ENCODE measurements at regions of chr10 and their contacts with region 1.

Region 1: DNA sequence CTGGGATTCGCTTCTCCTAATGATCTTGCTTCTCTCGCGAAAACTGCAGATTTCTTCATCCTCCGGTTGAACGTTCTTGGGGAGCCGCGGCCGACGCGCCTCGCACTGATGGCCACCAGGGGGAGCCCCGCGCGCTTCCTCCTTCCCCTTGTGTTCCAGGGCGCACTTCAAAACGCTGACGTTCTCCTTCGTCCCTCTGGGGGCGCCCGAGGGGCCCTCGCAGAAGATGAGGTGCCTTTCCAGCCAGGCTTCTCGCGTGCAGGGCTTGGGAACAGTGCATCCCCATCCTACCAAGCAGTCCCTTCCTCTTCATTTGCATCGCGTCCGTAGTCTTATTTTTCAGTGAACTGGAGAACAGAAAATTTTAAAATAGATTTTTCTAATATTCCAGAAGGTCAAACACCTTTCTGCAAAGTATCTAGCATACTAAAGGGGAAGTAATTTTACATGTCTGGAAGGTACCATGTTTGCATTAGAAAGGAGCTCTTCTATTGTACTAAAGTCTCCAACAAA is 22.5 kb downstream of the GSTO2 start:
- DNase-seq: peak; percentile 70 to 95 (median 85)
- ATAC-seq: peak; percentile 98 to 100 (median 100)
- H3K4me3 ChIP-seq: no peak overlapping the region
- H3K4me3 Mint-ChIP-seq: no peak overlapping the region
- H3K27ac ChIP-seq: no peak overlapping the region
- H3K27ac Mint-ChIP-seq: peak overlapping the region in 1 of 2 donors; percentile 28
- H3K4me1 ChIP-seq: peaks cover 0 to 7% of the 10 kb centered on the region in 2 experiments
- H3K4me1 Mint-ChIP-seq: peaks cover 5 to 7% (median 5%) of the 10 kb centered on the region in 3 donors
- H3K27me3 ChIP-seq: peaks cover 0 to 19% of the 10 kb centered on the region in 2 experiments
- H3K27me3 Mint-ChIP-seq: peaks cover 14 to 16% of the 10 kb centered on the region in 2 donors

Region 2: GRCh38 chr10:103752680-103753248 is 538.7 kb before region 1 on chr10:
- CTCF ChIA-PET with region 1: no interaction called
- POLR2A ChIA-PET with region 1: no interaction called
- DNase-seq: peak in 2 of 35 experiments; percentile 28 to 53
- ATAC-seq: no peak
- H3K4me3 ChIP-seq: no peak overlapping the region
- H3K4me3 Mint-ChIP-seq: no peak overlapping the region
- H3K27ac ChIP-seq: no peak overlapping the region
- H3K27ac Mint-ChIP-seq: no peak overlapping the region
- H3K4me1 ChIP-seq: peaks cover 4 to 15% of the 10 kb centered on the region in 2 experiments
- H3K4me1 Mint-ChIP-seq: peaks cover 12 to 33% (median 22%) of the 10 kb centered on the region in 3 donors
- H3K27me3 ChIP-seq: peaks cover 0 to 8% of the 10 kb centered on the region in 2 experiments
- H3K27me3 Mint-ChIP-seq: no peaks in the 10 kb centered on the region

Region 3: DNA sequence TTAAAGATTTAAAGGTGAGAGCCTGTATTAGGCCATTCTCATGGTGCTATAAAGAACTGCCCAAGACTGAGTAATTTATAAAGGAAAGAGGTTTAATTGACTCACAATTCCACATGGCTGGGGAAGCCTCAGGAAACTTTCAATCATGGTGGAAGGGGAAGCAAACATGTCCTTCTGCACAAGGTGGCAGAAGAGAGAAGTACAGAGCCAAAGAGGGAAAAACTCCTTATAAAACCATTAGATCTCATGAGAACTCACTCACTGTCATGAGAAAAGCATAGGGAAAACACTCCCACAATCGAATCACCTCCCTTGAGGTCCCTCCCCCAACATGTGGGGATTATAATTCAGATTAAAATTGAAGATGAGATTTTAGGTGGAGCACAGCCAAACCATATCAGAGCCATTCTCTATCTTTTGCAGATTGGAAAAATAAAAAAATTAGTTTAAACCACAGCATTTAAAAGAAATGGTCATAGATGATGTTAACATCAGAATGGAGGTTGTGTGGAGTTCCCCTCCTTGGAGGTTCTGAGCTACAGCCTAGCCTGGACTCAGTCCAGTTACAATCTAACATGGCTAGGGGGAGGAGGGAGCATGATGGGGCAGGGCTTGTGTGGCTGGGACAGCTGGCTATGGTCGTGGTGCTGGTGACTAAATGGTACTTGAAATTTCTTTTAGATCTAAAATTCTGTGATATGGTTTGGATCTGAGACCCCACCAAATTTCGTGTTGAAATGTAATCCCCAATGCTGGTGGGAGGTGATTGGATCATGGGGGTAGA is 10.6 kb after region 1 on chr10:
- CTCF ChIA-PET with region 1: interaction called, 19 to 67 read pairs
- POLR2A ChIA-PET with region 1: interaction called in 1 of 2 experiments, 3 read pairs
- DNase-seq: no peak
- ATAC-seq: no peak
- H3K4me3 ChIP-seq: no peak overlapping the region
- H3K4me3 Mint-ChIP-seq: no peak overlapping the region
- H3K27ac ChIP-seq: no peak overlapping the region
- H3K27ac Mint-ChIP-seq: no peak overlapping the region
- H3K4me1 ChIP-seq: peaks cover 45 to 52% of the 10 kb centered on the region in 2 experiments
- H3K4me1 Mint-ChIP-seq: peaks cover 58 to 67% (median 65%) of the 10 kb centered on the region in 3 donors
- H3K27me3 ChIP-seq: peaks cover 0 to 9% of the 10 kb centered on the region in 2 experiments
- H3K27me3 Mint-ChIP-seq: peaks cover 0 to 10% of the 10 kb centered on the region in 2 donors

Region 4: DNA sequence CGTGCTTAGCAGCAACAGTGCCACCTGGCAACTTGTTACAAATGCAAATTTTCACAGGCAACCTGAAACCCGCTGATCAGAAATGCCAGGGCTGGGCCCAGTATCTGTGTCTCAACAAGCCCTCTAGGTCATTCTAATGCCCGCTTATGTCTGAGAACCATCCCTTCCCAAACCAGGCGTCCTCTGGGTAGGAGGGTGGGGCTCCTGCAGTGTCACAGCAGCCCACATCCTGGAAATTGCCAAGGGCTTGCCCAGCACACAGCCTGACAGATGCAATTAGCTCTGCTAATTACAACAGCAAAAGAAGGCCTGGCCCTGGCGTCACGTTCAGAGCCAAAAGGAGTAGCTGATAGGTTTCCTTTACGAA is 30.9 kb after region 1 on chr10:
- CTCF ChIA-PET with region 1: interaction called in 1 of 2 experiments, 13 read pairs
- POLR2A ChIA-PET with region 1: interaction called in 1 of 2 experiments, 3 read pairs
- DNase-seq: peak in 5 of 35 experiments; percentile 20 to 45 (median 27)
- ATAC-seq: peak; percentile 33 to 62 (median 60)
- H3K4me3 ChIP-seq: peak overlapping the region in 1 of 2 donors; percentile 27
- H3K4me3 Mint-ChIP-seq: peak overlapping the region; percentile 62 to 85 (median 65)
- H3K27ac ChIP-seq: peak overlapping the region; percentile 74
- H3K27ac Mint-ChIP-seq: peak overlapping the region; percentile 97 to 98
- H3K4me1 ChIP-seq: peaks cover 84 to 92% of the 10 kb centered on the region in 2 experiments
- H3K4me1 Mint-ChIP-seq: peaks cover 98 to 100% (median 100%) of the 10 kb centered on the region in 3 donors
- H3K27me3 ChIP-seq: no peaks in the 10 kb centered on the region
- H3K27me3 Mint-ChIP-seq: no peaks in the 10 kb centered on the region

Region 5: GRCh38 chr10:104345941-104346340 is 54.4 kb after region 1 on chr10:
- CTCF ChIA-PET with region 1: interaction called, 85 to 167 read pairs
- POLR2A ChIA-PET with region 1: interaction called in 1 of 2 experiments, 4 read pairs
- DNase-seq: peak in 2 of 35 experiments; percentile 27 to 36
- ATAC-seq: peak; percentile 36 to 72 (median 58)
- H3K4me3 ChIP-seq: no peak overlapping the region
- H3K4me3 Mint-ChIP-seq: peak overlapping the region in 1 of 3 donors; percentile 44
- H3K27ac ChIP-seq: peak overlapping the region; percentile 3
- H3K27ac Mint-ChIP-seq: peak overlapping the region; percentile 82 to 85
- H3K4me1 ChIP-seq: peaks cover 12% of the 10 kb centered on the region in 2 experiments
- H3K4me1 Mint-ChIP-seq: peaks cover 13 to 16% (median 14%) of the 10 kb centered on the region in 3 donors
- H3K27me3 ChIP-seq: no peaks in the 10 kb centered on the region
- H3K27me3 Mint-ChIP-seq: no peaks in the 10 kb centered on the region

Measured in T-cell (primary cell).